GM10248 (cell line): ENCODE measurements at regions of chr2 and their contacts with region 1.

Region 1: GRCh38 chr2:96856776-96857673 is 791 bp downstream of the ANKRD39 start:
- DNase-seq: no peak
- CTCF ChIP-seq: no peak

Region 2: DNA sequence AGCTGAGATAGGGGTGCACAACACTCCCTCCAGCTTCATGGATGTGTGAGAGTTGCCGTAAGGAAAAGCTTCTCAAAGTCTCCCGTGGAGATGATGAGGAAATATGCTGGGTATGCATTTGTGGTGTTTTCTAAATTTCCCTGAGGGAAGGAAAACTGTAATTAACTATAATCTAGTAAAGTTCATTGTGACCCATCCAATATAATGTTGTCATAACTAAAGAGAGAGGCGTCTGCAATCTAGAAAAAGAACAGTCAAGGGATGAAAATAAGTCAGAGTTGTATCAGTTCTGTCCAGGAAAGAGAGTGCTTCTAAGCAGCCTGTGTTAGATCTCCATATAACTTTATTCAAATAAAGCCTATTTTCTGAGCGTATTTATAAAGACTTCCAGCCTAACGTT is 109.9 kb before region 1 on chr2:
- CTCF ChIA-PET with region 1: no interaction called
- POLR2A ChIA-PET with region 1: no interaction called
- DNase-seq: no peak
- CTCF ChIP-seq: no peak

Region 3: GRCh38 chr2:96842600-96842999 is 14.4 kb before region 1 on chr2:
- CTCF ChIA-PET with region 1: interaction called, 28 read pairs
- POLR2A ChIA-PET with region 1: no interaction called
- DNase-seq: no peak
- CTCF ChIP-seq: no peak

Region 4: DNA sequence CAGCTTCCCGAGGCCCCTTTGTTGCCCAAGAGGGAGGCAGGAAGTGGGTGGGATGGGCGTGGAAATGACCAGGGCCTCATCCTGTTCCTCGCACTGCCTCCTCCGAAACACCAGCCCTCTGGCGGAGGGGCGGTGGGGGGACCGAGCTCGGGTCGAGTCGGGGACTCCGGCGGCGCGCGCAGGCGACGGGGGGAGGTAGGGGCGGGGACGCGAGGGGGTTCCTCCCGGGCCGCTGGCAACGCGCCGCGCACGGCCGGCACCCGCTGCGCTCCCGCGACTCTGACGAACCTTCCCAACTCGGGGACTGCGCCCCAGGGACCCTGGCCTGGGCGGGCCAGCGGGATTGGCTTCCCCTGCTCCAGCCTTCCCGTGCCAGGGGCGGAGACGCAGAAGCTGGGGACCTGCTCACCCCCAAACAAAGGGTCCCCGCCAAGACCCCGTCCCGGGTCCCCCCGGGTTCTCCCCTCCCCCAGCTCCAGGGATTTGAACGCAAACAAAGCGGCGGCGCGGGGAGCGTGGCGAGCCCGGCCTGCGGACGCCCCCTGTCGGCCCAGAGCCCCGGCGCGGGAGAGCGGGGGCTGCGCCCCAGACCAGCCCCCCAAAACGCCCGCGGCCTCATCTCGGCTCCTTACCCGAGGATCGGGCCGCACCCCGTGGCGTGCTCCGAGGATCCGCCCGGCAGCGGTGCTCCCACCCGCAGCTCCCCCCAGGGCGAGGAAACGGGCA is 11.7 kb after region 1 on chr2:
- CTCF ChIA-PET with region 1: interaction called, 45 read pairs
- POLR2A ChIA-PET with region 1: interaction called, 3 read pairs
- DNase-seq: peak; percentile 87
- CTCF ChIP-seq: peak; percentile 52

Region 5: DNA sequence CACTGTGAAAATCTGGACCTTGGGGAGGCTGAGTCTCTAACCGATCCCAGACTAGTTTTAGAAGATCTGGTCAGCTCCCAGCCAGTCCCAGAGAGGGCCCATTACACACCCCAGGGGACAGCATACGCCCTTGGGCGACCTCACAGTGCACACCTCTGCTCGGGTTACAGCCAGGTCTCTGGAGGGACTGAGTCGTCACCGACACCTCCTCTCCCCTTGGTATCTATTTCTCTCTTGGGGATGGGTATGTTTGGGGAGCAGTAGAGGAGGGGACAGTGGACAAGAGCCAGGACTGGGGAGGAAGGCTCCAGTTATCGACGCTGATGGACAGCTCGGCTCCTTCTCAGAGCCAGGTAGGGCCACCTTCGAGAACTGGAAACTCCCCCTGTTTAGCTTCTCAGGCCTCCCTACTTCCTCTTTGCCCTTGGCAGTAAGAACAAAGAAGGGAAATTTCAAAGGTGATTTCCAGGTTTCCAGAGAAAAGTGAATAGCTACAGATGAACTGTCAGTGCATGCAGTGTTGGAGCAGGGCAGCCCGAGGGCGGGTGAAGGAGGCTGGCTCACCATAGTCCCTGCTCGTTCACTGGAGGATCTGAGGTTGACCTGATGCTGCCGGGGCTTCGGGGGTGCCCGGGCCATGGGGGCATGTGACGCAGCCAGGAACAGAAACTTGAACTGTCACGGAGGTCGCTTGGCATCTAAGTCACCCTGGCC is 17.2 kb after region 1 on chr2:
- CTCF ChIA-PET with region 1: interaction called, 45 read pairs
- POLR2A ChIA-PET with region 1: interaction called, 3 read pairs
- DNase-seq: peak; percentile 61
- CTCF ChIP-seq: no peak

Region 6: DNA sequence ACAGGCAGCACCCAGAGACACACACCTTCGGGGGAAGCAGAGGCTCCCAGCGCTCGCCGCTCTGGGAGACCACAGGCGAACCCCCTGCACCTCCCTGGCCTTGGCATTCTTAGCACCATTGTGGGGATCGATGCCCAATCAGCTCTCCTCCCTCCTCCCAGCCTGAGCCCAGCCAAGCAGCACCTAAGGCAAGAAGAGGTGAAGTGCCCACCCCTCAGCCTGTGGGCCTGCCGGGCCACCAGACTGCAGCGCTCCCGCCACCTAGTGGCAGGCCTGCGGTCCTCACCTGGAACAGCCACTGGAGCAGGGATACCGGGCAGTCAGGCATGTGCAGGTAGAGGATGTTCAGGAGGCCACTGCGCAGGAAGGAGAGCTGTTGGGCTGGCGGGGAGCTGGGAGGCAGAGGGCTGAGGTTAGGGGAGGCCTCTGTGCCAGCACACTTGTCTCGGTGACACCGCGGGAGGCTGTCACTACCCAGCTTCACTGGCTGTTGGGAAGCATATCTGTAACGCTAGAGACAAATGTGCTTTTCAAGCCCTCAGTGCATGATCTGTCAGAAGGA is 94.1 kb after region 1 on chr2:
- CTCF ChIA-PET with region 1: interaction called, 114 read pairs
- POLR2A ChIA-PET with region 1: no interaction called
- DNase-seq: peak; percentile 85
- CTCF ChIP-seq: peak; percentile 98

Region 7: GRCh38 chr2:96960153-96960961 is 103.3 kb after region 1 on chr2:
- CTCF ChIA-PET with region 1: interaction called, 114 read pairs
- POLR2A ChIA-PET with region 1: no interaction called
- DNase-seq: peak; percentile 89
- CTCF ChIP-seq: peak; percentile 91